Mammary epithelial cell (primary cell): ENCODE measurements at regions of chr10 and their contacts with region 1.

Region 1: GRCh38 chr10:71285180-71285545 is 33.9 kb upstream of the SLC29A3 start:
- DNase-seq: peak; percentile 9
- H3K4me3 ChIP-seq: no peak overlapping the region
- H3K27ac ChIP-seq: no peak overlapping the region
- H3K4me1 ChIP-seq: no peaks in the 10 kb centered on the region
- H3K27me3 ChIP-seq: no peaks in the 10 kb centered on the region
- CTCF ChIP-seq: peak; percentile 64 to 74

Region 2: GRCh38 chr10:70815504-70816219 is 469.5 kb before region 1 on chr10 and contains the start of gene SGPL1:
- CTCF ChIA-PET with region 1: no interaction called
- dilution Hi-C with region 1: no loop called
- in situ Hi-C with region 1: no loop called
- intact Hi-C with region 1: loop called (anchors 10 kb)
- DNase-seq: peak; percentile 81
- H3K4me3 ChIP-seq: peak within 1 kb of the TSS; percentile 63 to 71 (median 66)
- H3K27ac ChIP-seq: peak within 1 kb of the TSS; percentile 69
- H3K4me1 ChIP-seq: no peaks in the 10 kb centered on the region
- H3K27me3 ChIP-seq: no peaks in the 10 kb centered on the region
- CTCF ChIP-seq: peak; percentile 86 to 90
- total RNA-seq, gene SGPL1: 65.0 to 97.4 TPM

Region 3: GRCh38 chr10:70920565-70920964 is 364.6 kb before region 1 on chr10:
- CTCF ChIA-PET with region 1: no interaction called
- dilution Hi-C with region 1: no loop called
- in situ Hi-C with region 1: loop called in 1 of 2 experiments (anchors 5 kb)
- intact Hi-C with region 1: loop called (anchors 1 kb)
- DNase-seq: peak; percentile 34
- H3K4me3 ChIP-seq: no peak overlapping the region
- H3K27ac ChIP-seq: no peak overlapping the region
- H3K4me1 ChIP-seq: no peaks in the 10 kb centered on the region
- H3K27me3 ChIP-seq: peaks cover 2% of the 10 kb centered on the region
- CTCF ChIP-seq: peak in 1 of 2 donors; percentile 18

Region 4: GRCh38 chr10:70931168-70931815 is 353.9 kb before region 1 on chr10:
- CTCF ChIA-PET with region 1: no interaction called
- dilution Hi-C with region 1: no loop called
- in situ Hi-C with region 1: loop called in 1 of 2 experiments (anchors 5 kb)
- intact Hi-C with region 1: no loop called
- DNase-seq: peak; percentile 79
- H3K4me3 ChIP-seq: no peak overlapping the region
- H3K27ac ChIP-seq: no peak overlapping the region
- H3K4me1 ChIP-seq: peaks cover 17% of the 10 kb centered on the region
- H3K27me3 ChIP-seq: no peaks in the 10 kb centered on the region
- CTCF ChIP-seq: no peak

Region 5: GRCh38 chr10:71010730-71011129 is 274.4 kb before region 1 on chr10:
- CTCF ChIA-PET with region 1: no interaction called
- dilution Hi-C with region 1: no loop called
- in situ Hi-C with region 1: no loop called
- intact Hi-C with region 1: loop called (anchors 2 kb)
- DNase-seq: no peak
- H3K4me3 ChIP-seq: no peak overlapping the region
- H3K27ac ChIP-seq: no peak overlapping the region
- H3K4me1 ChIP-seq: no peaks in the 10 kb centered on the region
- H3K27me3 ChIP-seq: peaks cover 3% of the 10 kb centered on the region
- CTCF ChIP-seq: peak in 1 of 2 donors; percentile 28

Region 6: DNA sequence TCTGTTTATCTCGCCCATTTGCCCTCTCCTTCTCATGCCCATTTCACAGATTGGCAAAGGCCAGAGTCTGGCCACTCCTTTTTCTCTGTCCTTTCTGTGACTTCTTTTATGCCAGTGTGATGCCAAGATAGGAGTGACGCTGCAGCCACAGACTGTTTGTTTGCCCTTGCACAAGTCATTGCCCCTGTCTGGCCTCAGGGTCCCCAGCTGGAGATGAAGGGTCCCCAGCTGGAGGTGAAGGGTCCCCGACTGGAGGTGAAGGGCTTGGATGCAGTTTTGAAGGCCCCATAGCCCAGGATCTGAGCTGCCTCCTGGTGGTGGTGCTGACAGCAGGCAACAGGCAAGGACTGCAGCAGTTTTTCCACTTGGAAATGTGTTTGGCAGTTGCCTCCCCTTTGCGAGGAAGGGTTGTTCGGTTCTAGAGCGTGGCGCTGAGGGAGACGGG is 16.9 kb before region 1 on chr10:
- CTCF ChIA-PET with region 1: no interaction called
- dilution Hi-C with region 1: no loop called
- in situ Hi-C with region 1: no loop called
- intact Hi-C with region 1: no loop called
- DNase-seq: no peak
- H3K4me3 ChIP-seq: no peak overlapping the region
- H3K27ac ChIP-seq: no peak overlapping the region
- H3K4me1 ChIP-seq: peaks cover 6% of the 10 kb centered on the region
- H3K27me3 ChIP-seq: no peaks in the 10 kb centered on the region
- CTCF ChIP-seq: peak; percentile 36 to 66

Region 7: DNA sequence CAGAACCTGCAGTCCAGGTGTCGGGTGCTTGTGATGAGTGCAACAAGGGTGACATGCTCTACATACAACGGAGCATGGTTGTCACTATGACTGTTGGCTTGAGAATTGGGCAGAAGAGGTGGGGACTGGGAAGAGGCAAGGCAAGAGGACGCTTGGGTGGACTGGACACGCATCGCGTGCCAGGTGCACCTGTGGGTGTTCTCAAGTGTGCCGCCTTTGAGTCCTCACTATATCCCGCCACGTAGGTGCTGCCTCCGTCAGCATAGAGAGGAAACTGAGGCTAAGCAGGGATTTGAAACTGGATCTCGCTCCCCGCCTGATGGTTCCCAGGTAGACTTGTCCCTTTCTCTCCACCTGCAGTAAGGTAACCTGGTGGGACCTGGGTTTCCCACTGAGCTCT is 138.7 kb after region 1 on chr10:
- CTCF ChIA-PET with region 1: no interaction called
- dilution Hi-C with region 1: no loop called
- in situ Hi-C with region 1: no loop called
- intact Hi-C with region 1: no loop called
- DNase-seq: no peak
- H3K4me3 ChIP-seq: no peak overlapping the region
- H3K27ac ChIP-seq: no peak overlapping the region
- H3K4me1 ChIP-seq: no peaks in the 10 kb centered on the region
- H3K27me3 ChIP-seq: no peaks in the 10 kb centered on the region
- CTCF ChIP-seq: no peak

Region 8: DNA sequence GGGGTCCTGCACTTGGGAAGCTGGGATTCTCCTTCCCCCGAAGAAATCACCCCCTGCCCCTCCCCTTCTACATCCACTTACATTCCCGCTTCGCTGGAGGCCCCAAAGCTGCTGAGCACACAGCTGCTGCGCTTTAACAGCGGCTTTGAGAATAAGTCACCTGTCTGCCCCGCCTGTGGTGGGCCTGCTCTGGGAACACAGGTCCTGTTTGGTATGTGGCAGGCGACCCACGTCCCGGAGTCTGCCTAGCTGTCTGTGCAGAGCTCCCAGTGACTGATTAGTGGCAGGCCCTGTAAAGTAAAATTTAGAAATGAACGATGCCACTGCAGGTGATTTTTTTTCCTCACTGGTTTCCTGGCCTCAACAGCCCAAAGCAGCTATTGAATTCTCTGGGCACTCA is 158.5 kb after region 1 on chr10:
- CTCF ChIA-PET with region 1: no interaction called
- dilution Hi-C with region 1: no loop called
- in situ Hi-C with region 1: no loop called
- intact Hi-C with region 1: no loop called
- DNase-seq: no peak
- H3K4me3 ChIP-seq: no peak overlapping the region
- H3K27ac ChIP-seq: no peak overlapping the region
- H3K4me1 ChIP-seq: no peaks in the 10 kb centered on the region
- H3K27me3 ChIP-seq: no peaks in the 10 kb centered on the region
- CTCF ChIP-seq: no peak

Region 9: GRCh38 chr10:71462062-71462935 is 177.1 kb after region 1 on chr10:
- CTCF ChIA-PET with region 1: no interaction called
- dilution Hi-C with region 1: no loop called
- in situ Hi-C with region 1: no loop called
- intact Hi-C with region 1: no loop called
- DNase-seq: no peak
- H3K4me3 ChIP-seq: no peak overlapping the region
- H3K27ac ChIP-seq: no peak overlapping the region
- H3K4me1 ChIP-seq: no peaks in the 10 kb centered on the region
- H3K27me3 ChIP-seq: no peaks in the 10 kb centered on the region
- CTCF ChIP-seq: no peak